Heart left ventricle (tissue), 16 donors: ENCODE measurements at regions of chr6 and their contacts with region 1.

Region 1: DNA sequence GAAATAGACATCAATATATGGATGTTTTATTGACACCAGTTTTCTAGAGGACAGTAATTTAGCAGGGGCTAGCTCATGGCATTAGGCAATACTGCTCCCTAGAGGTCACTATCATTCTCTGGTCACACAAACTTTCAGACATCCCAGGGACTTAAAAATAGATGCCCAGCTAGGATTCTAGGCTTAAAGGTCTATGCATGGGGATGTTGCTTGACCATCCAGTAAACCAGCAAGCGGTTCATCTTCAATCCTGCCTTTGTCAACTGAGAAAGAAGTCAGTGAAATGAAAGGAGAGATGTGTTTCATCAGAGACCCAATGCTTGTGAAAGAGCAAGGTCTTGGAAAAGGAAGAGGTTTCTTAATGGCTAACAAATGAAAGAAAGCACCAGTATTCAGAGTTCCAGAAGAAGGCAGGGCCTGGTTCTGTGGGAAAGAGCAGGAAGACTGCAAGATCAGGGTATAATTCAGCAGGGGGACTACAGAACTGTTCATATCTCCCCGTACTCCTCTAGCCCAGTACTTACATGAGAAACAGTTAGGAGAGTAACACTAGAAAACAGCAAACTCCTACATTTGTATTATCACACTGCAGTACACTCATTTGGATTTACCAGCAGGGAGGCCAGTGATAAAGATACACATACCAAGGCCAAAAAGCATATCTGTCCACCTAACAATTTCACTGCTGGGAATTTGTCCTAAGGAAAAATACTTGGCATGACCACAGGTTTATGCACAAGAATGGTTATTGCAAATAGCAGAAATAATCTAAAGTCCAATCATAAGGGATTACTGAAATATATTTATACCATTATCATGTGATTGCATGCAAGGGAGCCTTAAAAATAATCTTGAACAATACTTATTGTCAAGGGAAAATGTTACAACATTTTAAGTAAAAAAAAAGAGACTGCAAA is 151.4 kb upstream of the LAMA2 start:
- DNase-seq: peak in 1 of 5 donors; percentile 19
- ATAC-seq: peak; percentile 67 to 85 (median 80)
- H3K4me3 ChIP-seq: no peak overlapping the region
- H3K27ac ChIP-seq: peak overlapping the region in 4 of 12 donors; percentile 6 to 49 (median 22)
- H3K4me1 ChIP-seq: peaks cover 0 to 10% (median 0%) of the 10 kb centered on the region in 12 donors
- H3K27me3 ChIP-seq: no peaks in the 10 kb centered on the region
- CTCF ChIP-seq: peak; percentile 44 to 75 (median 60)
- POLR2A ChIP-seq: no peak

Region 2: GRCh38 chr6:127855542-127856159 is 875.9 kb before region 1 on chr6:
- intact Hi-C with region 1: loop called in 2 of 10 experiments (anchors 10 kb)
- DNase-seq: no peak
- ATAC-seq: no peak
- H3K4me3 ChIP-seq: no peak overlapping the region
- H3K27ac ChIP-seq: no peak overlapping the region
- H3K4me1 ChIP-seq: no peaks in the 10 kb centered on the region
- H3K27me3 ChIP-seq: no peaks in the 10 kb centered on the region
- CTCF ChIP-seq: peak in 10 of 12 donors; percentile 30 to 60 (median 42)
- POLR2A ChIP-seq: no peak

Region 3: GRCh38 chr6:128694303-128695009 is 37.1 kb before region 1 on chr6:
- intact Hi-C with region 1: no loop called
- DNase-seq: no peak
- ATAC-seq: no peak
- H3K4me3 ChIP-seq: no peak overlapping the region
- H3K27ac ChIP-seq: no peak overlapping the region
- H3K4me1 ChIP-seq: no peaks in the 10 kb centered on the region
- H3K27me3 ChIP-seq: no peaks in the 10 kb centered on the region
- CTCF ChIP-seq: no peak
- POLR2A ChIP-seq: no peak

Region 4: DNA sequence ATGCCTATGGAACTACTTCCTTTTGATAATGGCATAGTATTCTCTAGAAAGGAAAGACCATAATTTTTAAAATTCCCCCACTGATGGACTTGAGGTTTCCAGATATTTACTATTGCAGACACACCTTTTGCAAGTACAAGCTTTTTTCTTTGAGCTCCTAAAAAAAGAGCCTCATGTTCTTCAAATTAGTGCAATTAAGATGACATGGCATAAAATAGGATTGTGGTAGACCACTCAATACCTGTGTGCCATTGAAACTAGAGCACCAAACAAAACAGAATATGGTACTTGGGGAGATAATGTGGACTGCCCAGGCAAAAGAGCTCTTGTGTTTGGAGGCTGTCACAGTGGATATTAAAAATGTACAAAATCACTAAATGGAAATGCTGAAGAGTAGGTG is 132.5 kb after region 1 on chr6:
- intact Hi-C with region 1: no loop called
- DNase-seq: no peak
- ATAC-seq: no peak
- H3K4me3 ChIP-seq: no peak overlapping the region
- H3K27ac ChIP-seq: no peak overlapping the region
- H3K4me1 ChIP-seq: peaks cover 0 to 3% (median 0%) of the 10 kb centered on the region in 12 donors
- H3K27me3 ChIP-seq: no peaks in the 10 kb centered on the region
- CTCF ChIP-seq: no peak
- POLR2A ChIP-seq: no peak